Caco-2 (cell line): ENCODE measurements at regions of chr2 and their contacts with region 1.

Region 1: GRCh38 chr2:133844214-133844892 is 276.1 kb upstream of the NCKAP5 start:
- DNase-seq: peak; percentile 68 to 79
- H3K4me3 ChIP-seq: no peak overlapping the region
- H3K4me3 Mint-ChIP-seq: no peak overlapping the region
- H3K27ac Mint-ChIP-seq: no peak overlapping the region
- H3K4me1 ChIP-seq: no peaks in the 10 kb centered on the region
- H3K4me1 Mint-ChIP-seq: peaks cover 12% of the 10 kb centered on the region
- H3K27me3 ChIP-seq: no peaks in the 10 kb centered on the region
- H3K27me3 Mint-ChIP-seq: no peaks in the 10 kb centered on the region
- CTCF ChIP-seq: peak; percentile 80 to 90

Region 2: GRCh38 chr2:133171393-133172004 is 672.9 kb before region 1 on chr2:
- CTCF ChIA-PET with region 1: no interaction called
- POLR2A ChIA-PET with region 1: no interaction called
- intact Hi-C with region 1: loop called (anchors 10 kb)
- DNase-seq: peak in 1 of 2 experiments; percentile 59
- H3K4me3 ChIP-seq: no peak overlapping the region
- H3K4me3 Mint-ChIP-seq: no peak overlapping the region
- H3K27ac Mint-ChIP-seq: no peak overlapping the region
- H3K4me1 ChIP-seq: 0 out of 2 replicates have a peak, but pooled peaks cover 4% of the 10 kb centered on the region
- H3K4me1 Mint-ChIP-seq: no peaks in the 10 kb centered on the region
- H3K27me3 ChIP-seq: no peaks in the 10 kb centered on the region
- H3K27me3 Mint-ChIP-seq: no peaks in the 10 kb centered on the region
- CTCF ChIP-seq: peak; percentile 54 to 57

Region 3: DNA sequence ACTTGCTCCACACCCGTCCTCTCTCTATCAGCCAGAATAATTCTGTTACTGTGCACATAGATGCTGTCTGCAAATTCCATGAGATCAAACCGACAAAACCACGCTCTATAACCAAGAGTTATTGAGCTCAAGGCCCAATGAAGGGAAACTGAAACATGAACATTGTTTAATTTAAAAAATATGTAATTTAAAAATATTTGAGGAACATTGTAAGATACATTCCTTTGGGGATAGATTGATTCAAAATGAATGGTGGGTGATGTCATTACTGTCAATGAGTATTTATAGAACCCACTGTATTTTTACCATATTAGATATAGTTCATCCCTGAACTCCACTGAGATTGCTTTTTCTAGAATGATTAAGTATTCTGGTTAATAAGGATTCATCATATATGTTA is 326.5 kb before region 1 on chr2:
- CTCF ChIA-PET with region 1: interaction called, 9 read pairs
- POLR2A ChIA-PET with region 1: no interaction called
- intact Hi-C with region 1: loop called (anchors 1 kb)
- DNase-seq: no peak
- H3K4me3 ChIP-seq: no peak overlapping the region
- H3K4me3 Mint-ChIP-seq: no peak overlapping the region
- H3K27ac Mint-ChIP-seq: no peak overlapping the region
- H3K4me1 ChIP-seq: no peaks in the 10 kb centered on the region
- H3K4me1 Mint-ChIP-seq: no peaks in the 10 kb centered on the region
- H3K27me3 ChIP-seq: no peaks in the 10 kb centered on the region
- H3K27me3 Mint-ChIP-seq: no peaks in the 10 kb centered on the region
- CTCF ChIP-seq: no peak

Region 4: DNA sequence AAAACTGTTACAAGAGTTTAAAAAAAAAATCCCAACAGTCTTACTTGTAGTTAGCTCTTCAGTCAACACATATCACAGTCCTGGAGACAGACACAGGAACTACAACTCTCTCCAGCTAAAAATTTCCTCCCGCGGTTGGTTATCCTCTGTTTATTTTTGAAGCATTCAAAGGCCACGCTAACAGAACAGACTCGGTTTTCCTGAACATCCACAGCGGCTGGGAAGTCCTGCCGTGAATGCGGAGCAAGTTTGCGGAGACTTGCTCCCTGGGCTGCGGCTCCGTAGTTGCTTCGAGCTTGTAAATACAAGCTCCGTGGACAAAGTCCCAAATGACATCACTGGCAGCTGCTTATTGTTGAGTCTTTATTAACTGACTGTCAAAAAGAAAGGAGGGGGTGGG is 276.2 kb before region 1 on chr2 and contains the start of gene NCKAP5:
- CTCF ChIA-PET with region 1: interaction called, 11 read pairs
- POLR2A ChIA-PET with region 1: no interaction called
- intact Hi-C with region 1: no loop called
- DNase-seq: peak; percentile 60 to 67
- H3K4me3 ChIP-seq: peak within 1 kb of the TSS; percentile 18
- H3K4me3 Mint-ChIP-seq: peak within 1 kb of the TSS; percentile 71
- H3K27ac Mint-ChIP-seq: peak within 1 kb of the TSS; percentile 61
- H3K4me1 ChIP-seq: peaks cover 19% of the 10 kb centered on the region
- H3K4me1 Mint-ChIP-seq: peaks cover 27% of the 10 kb centered on the region
- H3K27me3 ChIP-seq: no peaks in the 10 kb centered on the region
- H3K27me3 Mint-ChIP-seq: no peaks in the 10 kb centered on the region
- CTCF ChIP-seq: no peak
- total RNA-seq, gene NCKAP5: 3.5 and 3.8 TPM in 2 replicates

Region 5: GRCh38 chr2:133658020-133658903 is 186.1 kb before region 1 on chr2:
- CTCF ChIA-PET with region 1: no interaction called
- POLR2A ChIA-PET with region 1: no interaction called
- intact Hi-C with region 1: no loop called
- DNase-seq: no peak
- H3K4me3 ChIP-seq: no peak overlapping the region
- H3K4me3 Mint-ChIP-seq: no peak overlapping the region
- H3K27ac Mint-ChIP-seq: no peak overlapping the region
- H3K4me1 ChIP-seq: peaks cover 11% of the 10 kb centered on the region
- H3K4me1 Mint-ChIP-seq: peaks cover 15% of the 10 kb centered on the region
- H3K27me3 ChIP-seq: no peaks in the 10 kb centered on the region
- H3K27me3 Mint-ChIP-seq: peaks cover under 1% of the 10 kb centered on the region
- CTCF ChIP-seq: no peak

Region 6: DNA sequence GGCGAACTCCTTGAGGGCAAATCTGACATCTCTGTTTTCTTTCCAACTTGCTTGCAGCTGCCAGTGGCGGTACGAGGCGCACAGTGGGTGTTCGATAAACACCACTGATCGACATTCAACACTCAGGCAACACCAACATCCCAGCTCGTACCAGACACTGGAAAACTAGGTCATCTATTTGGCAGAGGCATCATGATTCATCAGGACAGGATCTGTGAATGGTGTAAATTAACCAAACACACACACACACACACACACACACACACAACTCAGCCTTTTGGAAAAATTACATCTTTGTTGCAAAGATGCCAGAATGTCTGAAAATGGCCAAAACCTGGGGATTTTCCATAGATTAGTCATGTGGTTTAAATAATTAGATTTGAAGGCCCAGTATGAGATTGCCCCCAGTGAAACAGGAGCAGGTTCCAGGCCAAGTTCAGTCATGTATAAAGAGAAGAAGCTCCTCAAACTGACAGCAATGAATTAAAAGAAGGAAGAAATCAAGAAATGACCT is 125.6 kb before region 1 on chr2:
- CTCF ChIA-PET with region 1: no interaction called
- POLR2A ChIA-PET with region 1: no interaction called
- intact Hi-C with region 1: no loop called
- DNase-seq: no peak
- H3K4me3 ChIP-seq: no peak overlapping the region
- H3K4me3 Mint-ChIP-seq: no peak overlapping the region
- H3K27ac Mint-ChIP-seq: no peak overlapping the region
- H3K4me1 ChIP-seq: no peaks in the 10 kb centered on the region
- H3K4me1 Mint-ChIP-seq: no peaks in the 10 kb centered on the region
- H3K27me3 ChIP-seq: no peaks in the 10 kb centered on the region
- H3K27me3 Mint-ChIP-seq: no peaks in the 10 kb centered on the region
- CTCF ChIP-seq: no peak

Region 7: GRCh38 chr2:133780099-133780839 is 64.1 kb before region 1 on chr2:
- CTCF ChIA-PET with region 1: interaction called, 12 read pairs
- POLR2A ChIA-PET with region 1: no interaction called
- intact Hi-C with region 1: loop called (anchors 2 kb)
- DNase-seq: peak; percentile 56 to 78
- H3K4me3 ChIP-seq: no peak overlapping the region
- H3K4me3 Mint-ChIP-seq: no peak overlapping the region
- H3K27ac Mint-ChIP-seq: no peak overlapping the region
- H3K4me1 ChIP-seq: 0 out of 2 replicates have a peak, but pooled peaks cover 4% of the 10 kb centered on the region
- H3K4me1 Mint-ChIP-seq: no peaks in the 10 kb centered on the region
- H3K27me3 ChIP-seq: no peaks in the 10 kb centered on the region
- H3K27me3 Mint-ChIP-seq: no peaks in the 10 kb centered on the region
- CTCF ChIP-seq: peak; percentile 84 to 91